Ovary (tissue), 10 donors: ENCODE measurements at regions of chr1 and their contacts with region 1.

Region 1: DNA sequence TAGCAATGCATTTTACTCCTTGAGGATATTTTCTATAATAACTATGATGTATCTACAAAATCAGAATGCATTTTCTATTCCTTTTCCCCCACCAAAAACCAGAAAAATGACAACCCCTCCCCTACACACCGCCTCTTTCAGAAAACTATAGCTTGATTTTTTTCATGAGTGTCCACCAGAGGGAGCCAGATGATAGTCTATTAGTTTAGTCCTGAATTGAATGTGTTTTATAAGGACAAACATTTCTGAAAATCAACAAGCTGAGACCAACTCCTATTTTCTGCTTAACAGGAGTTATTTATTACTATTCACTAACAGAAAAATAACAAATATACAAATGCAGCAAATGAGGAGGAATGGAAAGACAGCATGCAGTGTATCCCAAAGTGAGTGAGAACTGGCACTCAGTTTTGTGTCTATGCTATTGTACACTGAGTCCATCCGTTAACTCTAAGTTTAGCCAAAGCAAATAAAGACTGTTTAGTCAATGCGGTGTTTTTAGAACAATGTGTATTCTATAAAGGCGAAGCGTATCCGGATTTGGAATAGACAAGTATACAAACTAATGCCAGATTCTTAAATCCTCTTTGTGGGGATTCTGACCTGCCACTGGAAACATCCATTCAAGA is 182.6 kb downstream of the VAV3 start:
- DNase-seq: no peak
- H3K4me3 ChIP-seq: no peak overlapping the region
- H3K27ac ChIP-seq: no peak overlapping the region
- H3K4me1 ChIP-seq: no peaks in the 10 kb centered on the region
- H3K27me3 ChIP-seq: no peaks in the 10 kb centered on the region
- CTCF ChIP-seq: peak in 2 of 3 donors; percentile 32 to 37
- EP300 ChIP-seq: no peak
- POLR2A ChIP-seq: no peak

Region 2: DNA sequence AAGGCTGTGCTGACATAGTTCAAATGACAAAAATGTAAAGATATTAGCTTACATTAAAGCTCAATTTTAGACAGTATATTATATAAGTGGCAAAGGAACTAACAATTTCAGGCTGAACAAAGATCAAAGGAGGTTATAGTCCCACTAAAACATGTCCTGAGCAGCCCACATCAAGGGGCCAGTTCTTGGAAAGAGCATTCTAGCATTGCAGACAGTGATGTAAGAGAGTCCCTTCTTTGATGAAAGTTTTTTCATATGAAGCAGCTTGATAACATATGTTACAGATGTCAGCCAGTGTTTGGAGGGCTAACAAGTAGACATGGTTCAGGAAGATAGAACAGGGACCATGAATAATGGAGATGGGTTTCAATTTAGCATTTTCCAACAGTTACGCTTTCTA is 339.8 kb before region 1 on chr1:
- intact Hi-C with region 1: no loop called
- DNase-seq: no peak
- H3K4me3 ChIP-seq: no peak overlapping the region
- H3K27ac ChIP-seq: no peak overlapping the region
- H3K4me1 ChIP-seq: no peaks in the 10 kb centered on the region
- H3K27me3 ChIP-seq: no peaks in the 10 kb centered on the region
- CTCF ChIP-seq: no peak
- EP300 ChIP-seq: no peak
- POLR2A ChIP-seq: no peak

Region 3: DNA sequence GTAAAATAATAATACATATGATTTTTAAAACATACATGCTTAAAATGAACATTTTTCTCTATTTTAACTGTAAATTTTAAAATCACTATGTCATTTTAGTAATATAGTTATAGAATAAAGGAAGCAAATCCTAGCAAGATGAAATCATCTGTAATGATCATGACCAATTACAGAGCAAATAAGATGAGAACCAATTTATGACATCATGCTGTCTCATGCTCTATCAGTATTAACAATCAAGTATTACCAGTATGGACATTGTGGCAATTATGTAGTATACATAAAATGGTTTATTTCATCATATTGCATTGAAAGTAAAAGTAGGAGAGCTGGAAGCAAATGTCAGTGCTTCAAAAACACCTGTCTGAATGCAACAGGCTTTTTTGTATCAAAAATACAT is 72.3 kb before region 1 on chr1:
- intact Hi-C with region 1: no loop called
- DNase-seq: no peak
- H3K4me3 ChIP-seq: no peak overlapping the region
- H3K27ac ChIP-seq: no peak overlapping the region
- H3K4me1 ChIP-seq: no peaks in the 10 kb centered on the region
- H3K27me3 ChIP-seq: no peaks in the 10 kb centered on the region
- CTCF ChIP-seq: no peak
- EP300 ChIP-seq: no peak
- POLR2A ChIP-seq: no peak

Region 4: GRCh38 chr1:108125312-108126138 is 343.2 kb after region 1 on chr1:
- intact Hi-C with region 1: loop called (anchors 5 to 10 kb)
- DNase-seq: peak; percentile 14 to 41 (median 28)
- H3K4me3 ChIP-seq: no peak overlapping the region
- H3K27ac ChIP-seq: no peak overlapping the region
- H3K4me1 ChIP-seq: no peaks in the 10 kb centered on the region
- H3K27me3 ChIP-seq: no peaks in the 10 kb centered on the region
- CTCF ChIP-seq: peak; percentile 37 to 52 (median 41)
- EP300 ChIP-seq: no peak
- POLR2A ChIP-seq: no peak